ENCODE measurements at regions of chr9 and their contacts with region 1.

Region 1: DNA sequence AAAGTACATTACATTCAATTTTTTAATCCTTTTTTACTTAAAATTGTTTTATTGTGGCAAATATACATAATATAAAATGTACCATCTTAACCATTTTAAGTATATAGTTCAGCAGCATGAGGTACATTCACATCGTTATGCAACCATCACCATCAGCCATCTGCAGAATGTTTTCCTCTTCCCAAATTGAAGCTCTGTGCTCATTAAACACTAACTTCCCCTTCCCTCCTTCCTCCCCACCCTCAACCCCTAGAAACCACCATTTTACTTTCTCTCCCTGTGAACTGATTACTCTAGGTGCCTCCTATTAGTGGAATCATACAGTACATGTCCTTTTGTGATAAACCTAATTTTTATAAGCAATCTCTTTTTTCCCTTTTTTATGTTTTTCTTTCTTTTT is 15.6 kb downstream of the TEX53 start:
- DNase-seq: no peak
- ATAC-seq: peak in 1 of 4 donors; percentile 31
- H3K4me3 ChIP-seq: no peak overlapping the region
- H3K27ac ChIP-seq: no peak overlapping the region
- H3K4me1 ChIP-seq: no peaks in the 10 kb centered on the region
- H3K27me3 ChIP-seq: no peaks in the 10 kb centered on the region
- CTCF ChIP-seq: no peak

Region 2: DNA sequence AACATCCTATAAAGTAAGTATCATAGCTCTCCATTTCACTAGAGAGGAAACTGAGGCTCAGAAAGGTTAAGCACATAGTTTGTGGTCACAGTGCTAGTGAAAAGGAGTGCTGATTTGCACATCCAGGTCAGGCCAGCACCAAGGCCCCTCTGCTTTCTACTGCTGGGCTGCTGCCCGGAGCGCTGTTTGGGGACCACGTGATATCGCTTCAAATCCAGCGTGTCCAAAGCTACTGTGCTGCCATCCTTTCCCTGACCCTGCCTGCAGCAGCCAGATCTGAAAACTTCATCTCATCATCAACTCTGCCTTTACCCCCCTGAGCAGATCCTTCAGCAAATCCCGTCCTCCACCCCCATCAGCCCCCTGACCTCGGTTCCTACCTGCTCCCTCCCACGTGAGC is 213.5 kb before region 1 on chr9:
- intact Hi-C with region 1: loop called in 1 of 3 experiments (anchors 10 kb)
- DNase-seq: peak in 1 of 6 donors; percentile 23
- ATAC-seq: no peak
- H3K4me3 ChIP-seq: no peak overlapping the region
- H3K27ac ChIP-seq: no peak overlapping the region
- H3K4me1 ChIP-seq: no peaks in the 10 kb centered on the region
- H3K27me3 ChIP-seq: no peaks in the 10 kb centered on the region
- CTCF ChIP-seq: no peak

Region 3: GRCh38 chr9:114499528-114499927 is 142.4 kb before region 1 on chr9:
- intact Hi-C with region 1: loop called in 1 of 3 experiments (anchors 10 kb)
- DNase-seq: no peak
- ATAC-seq: no peak
- H3K4me3 ChIP-seq: no peak overlapping the region
- H3K27ac ChIP-seq: no peak overlapping the region
- H3K4me1 ChIP-seq: peaks cover 0 to 17% (median 5%) of the 10 kb centered on the region in 3 donors
- H3K27me3 ChIP-seq: no peaks in the 10 kb centered on the region
- CTCF ChIP-seq: no peak

Region 4: DNA sequence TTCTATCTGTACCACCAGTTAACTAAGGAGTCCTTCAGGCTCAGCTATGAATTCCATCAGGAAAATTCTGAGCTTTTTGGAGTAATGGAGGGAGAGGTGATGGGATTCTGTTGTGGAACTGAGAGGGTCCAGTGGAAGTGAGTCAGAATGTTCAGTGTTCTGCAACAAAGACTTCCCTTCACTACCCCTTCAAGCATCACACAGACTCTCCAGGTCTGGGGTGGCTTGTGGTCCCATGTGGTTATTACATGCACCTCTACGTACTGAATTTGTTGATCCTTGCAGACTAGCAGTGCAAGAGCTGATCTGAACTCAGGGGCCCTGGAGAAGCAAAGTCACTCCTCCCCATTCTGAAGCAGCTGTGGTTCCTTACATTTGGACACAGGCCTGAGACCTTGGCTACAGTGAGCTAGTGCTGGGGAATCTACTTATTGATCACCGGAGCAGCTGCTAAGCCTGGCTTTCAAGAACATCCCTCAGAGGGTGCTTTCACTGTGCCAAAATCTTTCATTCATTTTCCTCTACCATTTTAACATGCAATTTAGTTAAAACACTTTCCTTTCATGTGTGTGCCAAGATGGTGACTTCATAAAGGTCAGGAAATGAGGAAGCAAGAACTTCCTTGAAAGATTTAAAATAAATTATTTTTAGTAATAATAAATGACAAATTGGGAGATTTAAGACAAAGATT is 551.0 kb after region 1 on chr9:
- intact Hi-C with region 1: no loop called
- DNase-seq: no peak
- ATAC-seq: no peak
- H3K4me3 ChIP-seq: no peak overlapping the region
- H3K27ac ChIP-seq: no peak overlapping the region
- H3K4me1 ChIP-seq: no peaks in the 10 kb centered on the region
- H3K27me3 ChIP-seq: peaks cover 0 to 7% (median 0%) of the 10 kb centered on the region in 4 donors
- CTCF ChIP-seq: no peak

Measured in pancreas (tissue), 10 donors.